ENCODE measurements at regions of chr3 and their contacts with region 1.

Region 1: DNA sequence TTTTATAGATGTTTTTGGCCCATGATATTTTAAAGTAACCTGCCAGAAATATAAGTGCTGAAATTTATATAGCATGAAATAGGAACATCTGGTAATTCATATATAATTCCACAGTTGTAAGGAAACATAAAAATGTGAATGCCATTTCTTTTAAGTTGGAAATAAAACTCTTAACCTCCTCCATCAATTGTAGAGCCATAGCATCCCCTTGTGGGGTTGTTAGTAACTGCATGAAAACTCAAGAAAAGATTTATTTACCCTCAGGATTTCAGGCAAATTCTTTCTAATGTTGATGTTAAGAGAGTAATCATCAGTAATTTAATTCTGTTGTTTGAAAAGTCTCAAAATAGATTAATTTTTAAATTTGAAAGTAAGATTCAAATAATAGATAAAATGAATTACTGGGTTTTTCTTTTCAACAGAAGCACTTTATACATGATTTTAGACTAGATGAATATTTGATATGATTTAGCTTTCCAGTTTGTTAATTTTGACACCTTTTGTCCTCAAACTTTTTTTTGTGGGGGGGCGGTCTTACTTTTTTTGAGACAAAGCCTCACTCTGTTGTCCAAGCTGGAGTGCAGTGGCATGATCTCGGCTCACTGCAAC is 74.7 kb downstream of the RASA2 start:
- DNase-seq: peak; percentile 55 to 73 (median 70)
- H3K4me3 ChIP-seq: no peak overlapping the region
- H3K4me3 Mint-ChIP-seq: no peak overlapping the region
- H3K27ac ChIP-seq: no peak overlapping the region
- H3K27ac Mint-ChIP-seq: peak overlapping the region in 6 of 7 donors; percentile 35 to 85 (median 78)
- H3K4me1 ChIP-seq: peaks cover 33% of the 10 kb centered on the region
- H3K4me1 Mint-ChIP-seq: peaks cover 15 to 22% (median 20%) of the 10 kb centered on the region in 4 donors
- H3K27me3 ChIP-seq: no peaks in the 10 kb centered on the region
- H3K27me3 Mint-ChIP-seq: no peaks in the 10 kb centered on the region

Region 2: DNA sequence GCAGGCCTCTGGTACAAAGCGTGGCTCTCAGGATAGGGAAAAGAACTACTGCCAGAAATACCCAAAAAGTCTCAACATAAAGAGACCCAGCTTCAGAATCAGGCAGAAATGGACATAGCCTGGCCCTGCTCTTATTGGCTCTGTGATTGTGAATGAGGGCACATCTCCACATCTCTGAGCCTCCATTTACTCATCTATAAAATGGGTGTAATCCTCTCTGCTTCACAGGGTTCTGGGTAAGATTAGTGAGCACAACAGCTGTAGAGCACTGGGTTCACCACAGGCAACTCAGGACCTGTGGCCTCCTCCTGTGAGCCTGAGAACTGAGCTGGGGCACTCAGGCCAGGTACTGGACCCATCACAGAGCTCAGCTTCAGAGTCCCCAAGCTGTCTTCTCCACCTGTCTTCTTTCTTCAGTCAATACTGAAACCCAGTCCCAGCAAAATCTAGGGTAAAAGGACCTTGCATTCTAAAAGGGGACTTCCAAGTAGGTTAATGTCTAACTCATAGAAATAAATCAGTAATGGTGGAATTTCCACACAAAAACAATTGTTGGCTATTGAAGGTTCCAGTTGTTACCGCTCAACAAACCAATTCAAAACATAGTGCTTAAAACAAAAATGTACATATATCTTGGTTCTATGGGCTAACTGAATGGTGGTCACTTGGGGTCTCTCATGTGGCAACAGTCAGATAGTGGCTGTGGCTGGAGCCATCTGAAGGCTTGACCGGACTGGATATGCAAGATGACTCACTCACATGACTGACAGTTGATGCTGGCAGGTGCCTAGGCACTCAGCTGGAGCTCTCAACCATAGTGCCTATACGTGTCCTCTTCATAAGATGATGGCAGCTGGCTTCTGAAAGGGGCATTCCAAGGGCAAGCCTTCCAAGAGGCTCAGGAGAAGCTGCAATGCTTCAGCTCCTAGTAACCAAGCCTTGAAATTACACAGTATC is 836.4 kb before region 1 on chr3:
- CTCF ChIA-PET with region 1: no interaction called
- POLR2A ChIA-PET with region 1: no interaction called
- intact Hi-C with region 1: no loop called
- DNase-seq: no peak
- H3K4me3 ChIP-seq: no peak overlapping the region
- H3K4me3 Mint-ChIP-seq: no peak overlapping the region
- H3K27ac ChIP-seq: no peak overlapping the region
- H3K27ac Mint-ChIP-seq: no peak overlapping the region
- H3K4me1 ChIP-seq: no peaks in the 10 kb centered on the region
- H3K4me1 Mint-ChIP-seq: no peaks in the 10 kb centered on the region
- H3K27me3 ChIP-seq: no peaks in the 10 kb centered on the region
- H3K27me3 Mint-ChIP-seq: no peaks in the 10 kb centered on the region

Region 3: DNA sequence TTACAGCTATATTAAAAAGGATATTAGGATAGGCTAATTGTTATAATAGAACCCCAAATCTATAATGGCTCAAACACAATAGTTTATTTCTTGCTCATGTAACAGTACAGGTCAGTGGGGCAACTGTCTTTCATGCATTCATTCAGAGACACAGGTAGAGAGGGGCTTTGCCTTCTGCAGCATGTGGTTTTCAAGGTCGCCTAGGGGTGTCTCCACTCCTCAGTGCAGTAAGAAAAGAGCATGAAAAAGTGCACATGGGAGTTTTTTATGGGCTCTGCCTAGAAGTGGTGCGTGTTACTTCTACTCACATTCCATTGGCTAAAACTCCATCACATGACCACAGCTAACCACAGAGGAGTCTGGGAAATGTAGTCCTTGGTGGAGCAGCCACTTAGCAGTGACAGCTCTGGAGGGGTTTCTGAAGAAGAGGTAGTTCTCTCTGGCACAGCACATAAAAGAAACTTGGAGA is 191.4 kb before region 1 on chr3:
- CTCF ChIA-PET with region 1: no interaction called
- POLR2A ChIA-PET with region 1: no interaction called
- intact Hi-C with region 1: loop called (anchors 10 kb)
- DNase-seq: peak; percentile 82 to 88 (median 84)
- H3K4me3 ChIP-seq: no peak overlapping the region
- H3K4me3 Mint-ChIP-seq: no peak overlapping the region
- H3K27ac ChIP-seq: no peak overlapping the region
- H3K27ac Mint-ChIP-seq: peak overlapping the region in 6 of 7 donors; percentile 30 to 90 (median 58)
- H3K4me1 ChIP-seq: no peaks in the 10 kb centered on the region
- H3K4me1 Mint-ChIP-seq: peaks cover 5 to 11% (median 8%) of the 10 kb centered on the region in 4 donors
- H3K27me3 ChIP-seq: no peaks in the 10 kb centered on the region
- H3K27me3 Mint-ChIP-seq: no peaks in the 10 kb centered on the region

Region 4: GRCh38 chr3:141392897-141393734 is 168.4 kb before region 1 on chr3:
- CTCF ChIA-PET with region 1: no interaction called
- POLR2A ChIA-PET with region 1: no interaction called
- intact Hi-C with region 1: no loop called
- DNase-seq: no peak
- H3K4me3 ChIP-seq: no peak overlapping the region
- H3K4me3 Mint-ChIP-seq: no peak overlapping the region
- H3K27ac ChIP-seq: no peak overlapping the region
- H3K27ac Mint-ChIP-seq: no peak overlapping the region
- H3K4me1 ChIP-seq: peaks cover 10% of the 10 kb centered on the region
- H3K4me1 Mint-ChIP-seq: peaks cover 11 to 28% (median 16%) of the 10 kb centered on the region in 4 donors
- H3K27me3 ChIP-seq: no peaks in the 10 kb centered on the region
- H3K27me3 Mint-ChIP-seq: no peaks in the 10 kb centered on the region

Region 5: GRCh38 chr3:141477224-141477623 is 84.3 kb before region 1 on chr3:
- CTCF ChIA-PET with region 1: interaction called, 163 read pairs
- POLR2A ChIA-PET with region 1: interaction called, 7 read pairs
- intact Hi-C with region 1: loop called (anchors 1 kb)
- DNase-seq: no peak
- H3K4me3 ChIP-seq: no peak overlapping the region
- H3K4me3 Mint-ChIP-seq: no peak overlapping the region
- H3K27ac ChIP-seq: no peak overlapping the region
- H3K27ac Mint-ChIP-seq: peak overlapping the region in 1 of 7 donors; percentile 57
- H3K4me1 ChIP-seq: peaks cover 23% of the 10 kb centered on the region
- H3K4me1 Mint-ChIP-seq: peaks cover 13 to 38% (median 26%) of the 10 kb centered on the region in 4 donors
- H3K27me3 ChIP-seq: no peaks in the 10 kb centered on the region
- H3K27me3 Mint-ChIP-seq: no peaks in the 10 kb centered on the region

Region 6: GRCh38 chr3:141530133-141530768 is 31.3 kb before region 1 on chr3:
- CTCF ChIA-PET with region 1: interaction called, 4 read pairs
- POLR2A ChIA-PET with region 1: interaction called, 6 read pairs
- intact Hi-C with region 1: loop called (anchors 5 kb)
- DNase-seq: peak; percentile 44 to 54 (median 52)
- H3K4me3 ChIP-seq: no peak overlapping the region
- H3K4me3 Mint-ChIP-seq: peak overlapping the region; percentile 16 to 84 (median 74)
- H3K27ac ChIP-seq: peak overlapping the region; percentile 37
- H3K27ac Mint-ChIP-seq: peak overlapping the region; percentile 68 to 96 (median 92)
- H3K4me1 ChIP-seq: peaks cover 87% of the 10 kb centered on the region
- H3K4me1 Mint-ChIP-seq: peaks cover 51 to 73% (median 64%) of the 10 kb centered on the region in 4 donors
- H3K27me3 ChIP-seq: no peaks in the 10 kb centered on the region
- H3K27me3 Mint-ChIP-seq: no peaks in the 10 kb centered on the region

Region 7: GRCh38 chr3:141544697-141545096 is 16.8 kb before region 1 on chr3:
- CTCF ChIA-PET with region 1: interaction called, 16 read pairs
- POLR2A ChIA-PET with region 1: interaction called, 9 read pairs
- intact Hi-C with region 1: no loop called
- DNase-seq: peak; percentile 51 to 59 (median 53)
- H3K4me3 ChIP-seq: peak overlapping the region in 1 of 2 donors; percentile 39
- H3K4me3 Mint-ChIP-seq: peak overlapping the region; percentile 41 to 84 (median 73)
- H3K27ac ChIP-seq: peak overlapping the region; percentile 57
- H3K27ac Mint-ChIP-seq: peak overlapping the region; percentile 49 to 95 (median 87)
- H3K4me1 ChIP-seq: peaks cover 48% of the 10 kb centered on the region
- H3K4me1 Mint-ChIP-seq: peaks cover 57 to 81% (median 70%) of the 10 kb centered on the region in 4 donors
- H3K27me3 ChIP-seq: no peaks in the 10 kb centered on the region
- H3K27me3 Mint-ChIP-seq: no peaks in the 10 kb centered on the region

Region 8: GRCh38 chr3:141710573-141711251 is 149.2 kb after region 1 on chr3:
- CTCF ChIA-PET with region 1: no interaction called
- POLR2A ChIA-PET with region 1: no interaction called
- intact Hi-C with region 1: no loop called
- DNase-seq: no peak
- H3K4me3 ChIP-seq: no peak overlapping the region
- H3K4me3 Mint-ChIP-seq: no peak overlapping the region
- H3K27ac ChIP-seq: no peak overlapping the region
- H3K27ac Mint-ChIP-seq: no peak overlapping the region
- H3K4me1 ChIP-seq: no peaks in the 10 kb centered on the region
- H3K4me1 Mint-ChIP-seq: peaks cover 0 to 14% (median 0%) of the 10 kb centered on the region in 4 donors
- H3K27me3 ChIP-seq: no peaks in the 10 kb centered on the region
- H3K27me3 Mint-ChIP-seq: no peaks in the 10 kb centered on the region

Measured in CD4-positive, alpha-beta memory T cell (primary cell).